ENCODE measurements at regions of chr20 and their contacts with region 1.

Region 1: DNA sequence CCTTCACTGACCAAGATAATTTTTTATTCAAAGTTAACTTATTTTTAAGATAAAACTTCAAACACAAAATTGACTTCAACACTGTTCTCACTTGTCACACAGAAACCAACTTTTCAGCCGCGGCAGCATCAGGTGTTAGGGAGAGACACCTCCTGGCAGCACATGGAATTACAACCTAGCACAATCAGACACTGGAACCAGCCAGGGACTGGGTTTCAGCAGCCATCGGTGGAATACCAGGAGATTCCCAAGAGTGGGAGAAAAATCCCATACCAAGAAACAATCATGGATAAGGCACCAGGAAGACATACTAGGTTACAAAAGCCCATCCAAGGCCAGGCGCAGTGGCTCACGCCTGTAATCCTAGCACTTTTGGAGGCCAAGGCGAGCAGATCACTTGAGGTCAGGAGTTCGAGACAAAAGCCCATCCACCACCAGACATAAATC is 70.0 kb downstream of the SNX5 start:
- DNase-seq: peak; percentile 39 to 80 (median 54)
- ATAC-seq: peak; percentile 89
- H3K4me3 ChIP-seq: no peak overlapping the region
- H3K4me3 Mint-ChIP-seq: no peak overlapping the region
- H3K27ac ChIP-seq: no peak overlapping the region
- H3K27ac Mint-ChIP-seq: no peak overlapping the region
- H3K4me1 ChIP-seq: peaks cover 10% of the 10 kb centered on the region
- H3K4me1 Mint-ChIP-seq: peaks cover 11% of the 10 kb centered on the region
- H3K27me3 ChIP-seq: peaks cover 0 to 10% of the 10 kb centered on the region in 2 experiments
- H3K27me3 Mint-ChIP-seq: peaks cover 27% of the 10 kb centered on the region
- CTCF ChIP-seq: peak; percentile 95

Region 2: DNA sequence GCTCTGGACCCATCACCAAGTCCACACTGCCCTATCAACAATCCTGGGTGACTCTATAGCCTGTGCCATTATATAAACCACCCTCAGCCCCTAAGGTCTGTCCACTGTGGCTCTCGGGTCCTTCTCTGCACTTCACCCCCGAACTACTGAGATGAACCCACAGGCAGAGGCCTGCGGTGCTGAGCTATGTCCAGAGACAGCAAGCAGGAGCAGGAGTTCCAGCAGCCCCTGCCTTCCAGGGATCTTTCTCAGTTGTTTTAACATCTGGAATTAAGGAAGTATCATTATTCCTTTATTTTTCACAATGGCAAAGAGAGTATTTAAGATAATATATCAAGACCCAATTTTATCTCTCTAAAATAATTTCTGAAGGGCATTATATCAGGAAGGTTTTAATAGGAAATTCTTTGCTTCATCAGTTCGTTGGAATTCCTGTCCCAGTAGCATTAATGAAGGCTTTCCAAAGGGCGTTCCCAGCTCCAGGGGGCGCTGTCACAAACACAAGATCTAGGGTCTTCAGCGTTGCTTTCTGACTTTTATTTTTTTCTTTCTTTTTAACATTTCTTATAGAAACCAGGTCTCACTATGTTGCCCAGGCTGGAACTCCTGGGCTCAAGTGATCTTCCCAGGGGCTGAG is 243.8 kb before region 1 on chr20:
- CTCF ChIA-PET with region 1: no interaction called
- POLR2A ChIA-PET with region 1: no interaction called
- intact Hi-C with region 1: loop called in 1 of 2 experiments (anchors 10 kb)
- DNase-seq: peak in 2 of 14 experiments; percentile 33 to 39
- ATAC-seq: no peak
- H3K4me3 ChIP-seq: no peak overlapping the region
- H3K4me3 Mint-ChIP-seq: no peak overlapping the region
- H3K27ac ChIP-seq: no peak overlapping the region
- H3K27ac Mint-ChIP-seq: no peak overlapping the region
- H3K4me1 ChIP-seq: peaks cover under 1% of the 10 kb centered on the region
- H3K4me1 Mint-ChIP-seq: no peaks in the 10 kb centered on the region
- H3K27me3 ChIP-seq: no peaks in the 10 kb centered on the region
- H3K27me3 Mint-ChIP-seq: no peaks in the 10 kb centered on the region
- CTCF ChIP-seq: peak; percentile 53

Region 3: DNA sequence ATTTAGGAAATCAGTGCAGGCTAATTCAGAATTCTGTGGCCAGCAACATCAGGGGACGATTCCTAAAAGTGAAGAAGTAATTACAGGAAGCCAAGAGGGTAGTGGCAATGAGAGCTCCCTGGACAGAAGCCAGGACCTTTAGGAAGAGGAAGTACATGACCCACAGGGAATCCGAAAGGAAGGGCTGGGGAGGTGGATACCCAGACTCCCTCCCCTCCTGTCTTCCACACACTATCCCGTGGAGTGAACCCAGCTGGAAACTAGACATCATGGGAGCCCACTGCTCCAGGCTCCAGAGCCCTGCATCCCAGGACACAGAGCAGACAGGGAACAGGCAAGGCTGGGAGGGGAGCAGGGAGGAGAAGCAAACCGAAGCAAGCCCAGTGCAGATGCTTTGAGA is 13.0 kb before region 1 on chr20:
- CTCF ChIA-PET with region 1: no interaction called
- POLR2A ChIA-PET with region 1: no interaction called
- intact Hi-C with region 1: no loop called
- DNase-seq: no peak
- ATAC-seq: no peak
- H3K4me3 ChIP-seq: no peak overlapping the region
- H3K4me3 Mint-ChIP-seq: no peak overlapping the region
- H3K27ac ChIP-seq: no peak overlapping the region
- H3K27ac Mint-ChIP-seq: no peak overlapping the region
- H3K4me1 ChIP-seq: no peaks in the 10 kb centered on the region
- H3K4me1 Mint-ChIP-seq: no peaks in the 10 kb centered on the region
- H3K27me3 ChIP-seq: peaks cover 0 to 5% of the 10 kb centered on the region in 2 experiments
- H3K27me3 Mint-ChIP-seq: no peaks in the 10 kb centered on the region
- CTCF ChIP-seq: no peak